ENCODE measurements at regions of chr16 and their contacts with region 1.

Region 1: GRCh38 chr16:69150146-69150865 is 17.9 kb downstream of the UTP4 start:
- DNase-seq: peak in 1 of 2 donors; percentile 76
- H3K4me3 ChIP-seq: no peak overlapping the region
- H3K27ac ChIP-seq: no peak overlapping the region
- H3K4me1 ChIP-seq: peaks cover 0 to 6% of the 10 kb centered on the region in 2 donors
- H3K27me3 ChIP-seq: no peaks in the 10 kb centered on the region
- CTCF ChIP-seq: peak; percentile 72 to 81 (median 77)

Region 2: DNA sequence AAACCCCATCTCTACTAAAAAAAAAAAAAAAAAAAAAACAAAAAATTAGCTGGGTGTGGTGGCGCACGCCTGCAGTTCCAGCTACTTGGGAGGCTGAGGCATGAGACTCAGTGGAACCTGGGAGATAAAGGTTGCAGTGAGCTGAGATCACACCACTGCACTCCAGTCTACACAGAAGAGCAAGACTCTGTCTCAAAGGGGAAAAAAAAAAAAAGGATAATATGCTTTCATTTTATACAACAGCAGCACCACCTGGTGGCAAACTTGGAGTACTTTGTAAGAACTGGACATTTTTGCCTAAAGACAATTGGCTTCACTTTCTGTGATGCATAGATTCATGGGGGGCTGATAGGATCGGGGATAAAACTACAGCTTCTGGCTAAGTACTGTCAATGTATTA is 26.4 kb before region 1 on chr16:
- intact Hi-C with region 1: no loop called
- DNase-seq: no peak
- H3K4me3 ChIP-seq: no peak overlapping the region
- H3K27ac ChIP-seq: no peak overlapping the region
- H3K4me1 ChIP-seq: no peaks in the 10 kb centered on the region
- H3K27me3 ChIP-seq: no peaks in the 10 kb centered on the region
- CTCF ChIP-seq: peak; percentile 36 to 63 (median 37)

Region 3: DNA sequence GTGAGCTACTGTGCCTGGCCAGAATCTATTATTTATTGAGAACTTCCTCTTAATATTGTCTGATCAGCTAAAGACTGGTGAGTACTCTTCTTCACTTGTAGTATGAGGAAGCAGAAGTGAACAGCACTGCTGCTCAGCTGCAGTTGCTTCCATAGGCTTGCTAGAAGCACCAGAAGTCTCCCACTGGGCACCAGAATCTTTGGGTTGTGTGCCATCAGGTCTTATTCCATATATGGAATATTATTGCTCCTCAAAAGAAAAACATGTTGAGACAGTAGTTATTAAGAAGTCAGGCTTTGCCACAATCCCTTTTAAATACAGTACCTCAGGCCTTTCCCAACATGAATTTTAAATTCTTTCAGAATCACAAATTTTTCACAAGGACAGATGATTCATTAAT is 53.9 kb after region 1 on chr16:
- intact Hi-C with region 1: no loop called
- DNase-seq: no peak
- H3K4me3 ChIP-seq: no peak overlapping the region
- H3K27ac ChIP-seq: no peak overlapping the region
- H3K4me1 ChIP-seq: peaks cover 0 to 15% of the 10 kb centered on the region in 2 donors
- H3K27me3 ChIP-seq: no peaks in the 10 kb centered on the region
- CTCF ChIP-seq: no peak

Region 4: GRCh38 chr16:69286941-69287713 is 136.8 kb after region 1 on chr16:
- intact Hi-C with region 1: loop called (anchors 1 kb)
- DNase-seq: peak; percentile 29 to 88
- H3K4me3 ChIP-seq: no peak overlapping the region
- H3K27ac ChIP-seq: peak overlapping the region; percentile 63 to 71
- H3K4me1 ChIP-seq: peaks cover 8 to 14% of the 10 kb centered on the region in 2 donors
- H3K27me3 ChIP-seq: no peaks in the 10 kb centered on the region
- CTCF ChIP-seq: peak; percentile 31 to 68 (median 56)

Region 5: DNA sequence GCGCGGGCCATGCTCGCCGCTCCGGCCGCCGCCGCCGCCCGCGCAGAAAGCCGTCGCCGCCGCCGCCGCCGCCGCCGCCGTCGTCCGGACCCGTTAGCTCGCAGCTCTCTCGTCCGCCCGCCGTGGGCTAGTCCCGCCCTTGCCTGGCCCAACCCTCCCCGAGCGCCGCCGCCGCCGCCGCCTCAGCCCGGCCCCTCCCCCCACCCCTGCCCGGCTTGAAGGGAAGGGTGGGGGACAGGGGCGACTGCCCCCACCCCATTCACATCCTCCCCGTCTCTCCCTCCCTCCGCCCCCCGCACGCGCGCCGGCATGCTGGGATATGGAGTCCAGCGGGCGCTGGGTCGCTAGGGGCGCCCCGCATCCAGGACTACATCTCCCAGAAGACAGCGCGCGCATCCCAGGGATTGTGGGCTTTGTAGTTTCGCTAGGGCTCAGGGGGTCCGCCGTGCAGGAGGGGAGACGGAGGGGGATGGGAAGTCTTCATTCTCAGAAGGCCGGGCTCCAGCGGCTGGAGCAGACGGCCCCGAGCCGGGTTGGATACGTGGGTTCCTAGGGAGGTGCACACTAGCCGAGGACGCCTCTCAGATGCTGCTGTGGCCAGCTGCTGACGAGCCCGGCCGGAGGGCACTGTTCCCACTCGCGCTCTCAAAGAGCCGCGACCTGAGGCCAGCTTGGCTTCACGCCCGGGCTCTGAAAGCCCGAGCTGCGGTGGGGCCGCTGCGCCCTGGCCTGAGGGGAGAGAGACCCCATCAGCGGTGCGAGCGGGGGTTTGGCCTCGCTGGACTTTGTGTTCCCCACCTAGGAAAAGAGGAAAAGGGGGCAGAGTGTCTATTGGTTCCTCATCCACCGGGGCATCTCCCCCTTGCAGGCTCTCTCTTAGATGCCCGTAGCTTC is 1288.9 kb after region 1 on chr16 and contains the start of gene ST3GAL2:
- intact Hi-C with region 1: no loop called
- DNase-seq: peak; percentile 85 to 97
- H3K4me3 ChIP-seq: peak within 1 kb of the TSS; percentile 95 to 97
- H3K27ac ChIP-seq: peak within 1 kb of the TSS; percentile 67 to 76
- H3K4me1 ChIP-seq: peaks cover 0 to 20% of the 10 kb centered on the region in 2 donors
- H3K27me3 ChIP-seq: no peaks in the 10 kb centered on the region
- CTCF ChIP-seq: peak in 2 of 3 experiments; percentile 23 to 28
- total RNA-seq, gene ST3GAL2: 52.3 TPM